Gastrocnemius medialis (tissue), 4 donors: ENCODE measurements at regions of chr10 and their contacts with region 1.

Region 1: DNA sequence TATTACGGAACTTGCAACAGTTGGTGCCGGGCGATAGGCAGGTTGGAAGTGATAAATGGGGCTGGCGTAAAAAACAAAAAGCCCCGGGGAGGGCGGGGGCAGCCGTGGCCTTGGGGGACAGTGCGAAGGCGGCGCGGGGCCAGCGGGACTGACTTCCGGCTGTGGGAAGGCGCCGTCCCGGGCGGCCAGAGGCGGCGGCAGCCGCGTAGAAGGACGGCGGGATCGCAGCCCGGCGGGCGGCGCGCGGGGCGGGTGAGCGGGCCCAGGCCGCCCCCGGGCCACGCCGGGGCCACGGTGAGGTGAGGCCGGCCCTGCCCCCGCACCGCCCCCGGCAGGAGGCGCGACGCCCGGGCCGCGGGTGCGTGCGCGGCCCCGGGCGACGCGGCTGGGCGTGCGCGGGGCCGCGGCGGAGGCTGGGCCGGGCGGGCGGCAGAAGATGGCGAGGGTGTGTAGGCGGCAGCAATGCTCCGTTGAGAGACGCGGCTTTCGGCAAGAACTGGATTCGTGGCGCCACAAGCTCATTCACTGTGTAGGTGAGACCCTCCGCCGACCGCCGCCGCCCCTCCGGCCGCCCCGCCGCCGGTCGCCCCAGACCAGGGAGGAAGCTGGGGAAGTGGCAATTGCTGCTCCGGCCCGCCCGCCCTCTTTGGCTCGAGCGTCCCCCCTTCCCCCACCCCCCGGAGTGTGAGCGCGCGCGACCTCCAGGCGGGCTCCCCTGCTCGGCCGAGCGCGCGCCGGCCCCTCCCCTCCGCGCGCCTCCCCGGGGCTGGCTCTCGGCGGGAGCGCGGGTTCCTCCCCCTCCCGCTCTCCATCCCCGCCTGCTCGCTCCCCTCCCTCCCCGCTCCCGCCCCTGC is at the start of gene LCOR:
- DNase-seq: peak; percentile 71 to 82
- ATAC-seq: peak; percentile 79 to 82
- H3K4me3 ChIP-seq: peak within 1 kb of the TSS; percentile 81 to 90 (median 86)
- H3K27ac ChIP-seq: peak within 1 kb of the TSS; percentile 94 to 99 (median 98)
- H3K4me1 ChIP-seq: peaks cover 37 to 47% of the 10 kb centered on the region in 2 donors
- H3K27me3 ChIP-seq: no peaks in the 10 kb centered on the region
- CTCF ChIP-seq: peak in 1 of 5 experiments; percentile 28
- POLR2A ChIP-seq: peak; percentile 84 to 87
- total RNA-seq, gene LCOR: 9.2 to 20.0 (median 14.6) TPM

Region 2: DNA sequence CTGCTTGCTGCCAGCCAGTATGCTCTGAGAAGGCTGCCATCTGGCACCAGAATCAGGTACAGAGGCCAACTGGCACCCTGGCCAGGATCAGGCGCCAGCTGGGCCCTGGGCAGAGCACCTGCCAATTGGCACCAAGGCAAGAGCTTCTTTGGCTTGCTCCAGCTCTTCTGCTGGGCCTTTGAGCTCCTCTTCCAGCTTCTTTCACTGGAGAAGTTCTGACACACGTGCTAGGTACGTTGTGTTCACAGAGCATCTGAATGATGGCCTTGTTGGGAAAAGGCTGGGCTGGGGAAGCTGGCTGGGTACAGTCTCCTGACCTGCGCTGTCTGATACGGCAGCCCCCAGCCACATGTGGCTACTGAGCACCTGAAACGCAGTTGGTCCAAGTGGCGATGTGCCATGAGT is 441.6 kb before region 1 on chr10:
- in situ Hi-C with region 1: loop called in 1 of 4 experiments (anchors 10 kb)
- intact Hi-C with region 1: loop called (anchors 5 kb)
- DNase-seq: peak; percentile 77 to 92
- ATAC-seq: peak; percentile 98 to 100
- H3K4me3 ChIP-seq: no peak overlapping the region
- H3K27ac ChIP-seq: peak overlapping the region in 3 of 4 donors; percentile 42 to 64 (median 53)
- H3K4me1 ChIP-seq: peaks cover 8 to 16% of the 10 kb centered on the region in 2 donors
- H3K27me3 ChIP-seq: no peaks in the 10 kb centered on the region
- CTCF ChIP-seq: no peak
- POLR2A ChIP-seq: no peak

Region 3: GRCh38 chr10:96513698-96514561 is 318.2 kb before region 1 on chr10 and contains the start of gene TLL2:
- in situ Hi-C with region 1: no loop called
- intact Hi-C with region 1: loop called (anchors 5 kb)
- DNase-seq: peak; percentile 76 to 81
- ATAC-seq: peak; percentile 84 to 88
- H3K4me3 ChIP-seq: peak within 1 kb of the TSS; percentile 61 to 73 (median 66)
- H3K27ac ChIP-seq: peak within 1 kb of the TSS; percentile 39 to 61 (median 58)
- H3K4me1 ChIP-seq: peaks cover 13 to 26% of the 10 kb centered on the region in 2 donors
- H3K27me3 ChIP-seq: no peaks in the 10 kb centered on the region
- CTCF ChIP-seq: peak; percentile 59 to 87 (median 85)
- POLR2A ChIP-seq: peak in 1 of 2 donors; percentile 56
- total RNA-seq, gene TLL2: 0.10 to 1.0 (median 0.44) TPM in 3 of 4 donors, not detected in the other

Region 4: GRCh38 chr10:96765406-96766240 is 66.5 kb before region 1 on chr10:
- in situ Hi-C with region 1: no loop called
- intact Hi-C with region 1: loop called (anchors 2 kb)
- DNase-seq: peak; percentile 12 to 41
- ATAC-seq: peak in 1 of 2 donors; percentile 70
- H3K4me3 ChIP-seq: no peak overlapping the region
- H3K27ac ChIP-seq: no peak overlapping the region
- H3K4me1 ChIP-seq: no peaks in the 10 kb centered on the region
- H3K27me3 ChIP-seq: no peaks in the 10 kb centered on the region
- CTCF ChIP-seq: peak; percentile 39 to 72 (median 65)
- POLR2A ChIP-seq: no peak

Region 5: GRCh38 chr10:96991313-96991841 is 159.3 kb after region 1 on chr10:
- in situ Hi-C with region 1: no loop called
- intact Hi-C with region 1: no loop called
- DNase-seq: no peak
- ATAC-seq: no peak
- H3K4me3 ChIP-seq: no peak overlapping the region
- H3K27ac ChIP-seq: no peak overlapping the region
- H3K4me1 ChIP-seq: peaks cover 16 to 24% of the 10 kb centered on the region in 2 donors
- H3K27me3 ChIP-seq: no peaks in the 10 kb centered on the region
- CTCF ChIP-seq: no peak
- POLR2A ChIP-seq: no peak

Region 6: DNA sequence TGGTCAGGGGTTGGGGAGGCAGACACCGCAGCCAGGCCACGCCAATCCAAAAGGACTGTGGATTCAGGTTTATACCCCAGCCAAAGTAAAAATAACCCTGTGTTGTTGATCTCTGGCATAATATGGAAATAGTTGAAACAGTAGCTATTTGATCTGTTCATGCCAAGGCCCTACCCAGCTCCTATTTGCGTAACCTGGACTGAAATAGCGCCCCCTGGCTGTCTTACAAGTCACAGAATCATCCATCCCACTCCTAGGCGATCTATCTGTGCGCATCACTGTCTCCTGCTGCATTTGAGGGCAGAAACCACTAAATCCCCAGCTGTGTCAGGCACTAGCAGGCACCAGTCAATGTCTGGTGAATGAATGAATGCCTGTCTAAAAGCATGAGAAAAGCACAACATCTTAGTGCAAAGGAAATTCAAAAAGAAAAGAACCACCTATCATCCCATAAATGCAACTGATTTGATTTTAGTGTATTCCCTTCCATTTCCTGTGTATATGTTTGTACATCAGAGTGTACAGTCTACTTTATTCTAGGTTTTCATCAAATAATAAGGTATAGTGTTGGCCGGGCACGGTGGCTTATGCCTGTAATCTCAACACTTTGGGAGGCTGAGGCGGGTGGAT is 193.6 kb after region 1 on chr10:
- in situ Hi-C with region 1: loop called in 1 of 4 experiments (anchors 10 kb)
- intact Hi-C with region 1: loop called (anchors 2 kb)
- DNase-seq: peak; percentile 69 to 82
- ATAC-seq: peak; percentile 68 to 70
- H3K4me3 ChIP-seq: peak overlapping the region in 1 of 4 donors; percentile 17
- H3K27ac ChIP-seq: peak overlapping the region; percentile 79 to 96 (median 88)
- H3K4me1 ChIP-seq: peaks cover 31 to 32% of the 10 kb centered on the region in 2 donors
- H3K27me3 ChIP-seq: no peaks in the 10 kb centered on the region
- CTCF ChIP-seq: peak; percentile 76 to 89 (median 86)
- POLR2A ChIP-seq: no peak